Right cardiac atrium (tissue), 5 donors: ENCODE measurements at regions of chr11 and their contacts with region 1.

Region 1: DNA sequence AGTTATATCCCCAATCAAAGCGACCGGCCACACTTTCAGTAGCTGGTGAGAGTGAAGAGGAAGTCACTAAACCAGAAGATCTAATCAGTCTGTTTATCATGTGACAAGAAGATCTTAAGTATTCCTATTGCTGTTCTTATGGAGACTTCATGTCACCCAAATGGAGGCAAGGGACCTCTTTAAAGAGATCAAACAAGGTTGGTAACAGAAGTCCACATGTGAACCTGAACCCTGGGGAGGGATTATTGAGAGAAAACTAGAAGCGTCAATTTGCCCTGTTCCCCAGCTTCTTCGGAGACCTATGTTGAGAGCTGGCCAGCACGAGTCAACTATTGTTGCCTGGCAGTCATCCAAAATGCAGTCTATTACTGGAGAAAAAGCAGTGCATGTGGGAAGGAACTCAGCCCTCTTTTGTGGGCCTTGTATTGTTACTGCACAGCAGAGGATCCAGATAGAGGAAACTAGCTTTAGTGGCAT is 76.9 kb upstream of the CTSC start:
- DNase-seq: peak; percentile 19 to 59 (median 36)
- ATAC-seq: peak; percentile 69 to 82
- H3K4me3 ChIP-seq: no peak overlapping the region
- H3K27ac ChIP-seq: no peak overlapping the region
- H3K4me1 ChIP-seq: no peaks in the 10 kb centered on the region
- H3K27me3 ChIP-seq: no peaks in the 10 kb centered on the region

Region 2: DNA sequence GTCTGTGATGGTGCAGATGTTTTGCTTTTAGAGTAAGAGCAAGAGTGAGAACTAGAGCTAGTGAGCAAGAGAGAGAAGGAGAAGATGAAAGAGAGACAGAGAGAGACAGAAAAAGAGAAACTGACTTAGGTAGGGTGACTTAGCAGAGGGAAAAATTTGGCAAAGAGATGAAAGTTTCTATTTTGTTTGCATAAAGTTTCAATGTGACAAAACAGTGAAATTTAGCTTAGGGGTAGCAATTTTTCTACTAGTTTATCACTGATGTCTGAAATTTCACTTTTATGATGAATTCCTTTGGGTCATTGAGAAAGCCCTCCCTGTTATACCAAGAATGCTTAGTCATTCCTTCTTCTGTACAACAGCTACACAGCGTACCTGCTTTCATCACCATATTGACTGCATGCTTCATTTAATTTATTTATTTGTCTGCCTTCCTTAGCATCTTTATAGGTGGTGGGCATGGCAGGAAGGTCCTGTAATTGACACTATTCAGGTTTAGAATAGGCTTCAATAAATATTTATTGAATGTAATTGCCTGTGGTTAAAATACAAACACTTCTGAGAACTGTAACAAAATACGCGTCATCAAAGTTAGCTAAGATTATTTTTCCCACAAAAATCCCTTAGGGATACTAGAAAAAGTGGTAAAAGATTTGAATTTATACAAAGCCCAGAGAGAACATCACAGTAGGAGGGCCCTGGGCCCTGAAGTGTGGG is 56.9 kb before region 1 on chr11:
- intact Hi-C with region 1: loop called in 1 of 4 experiments (anchors 10 kb)
- DNase-seq: no peak
- ATAC-seq: peak; percentile 41 to 54
- H3K4me3 ChIP-seq: no peak overlapping the region
- H3K27ac ChIP-seq: no peak overlapping the region
- H3K4me1 ChIP-seq: no peaks in the 10 kb centered on the region
- H3K27me3 ChIP-seq: no peaks in the 10 kb centered on the region